PC-9 (cell line): ENCODE measurements at regions of chr1 and their contacts with region 1.

Region 1: DNA sequence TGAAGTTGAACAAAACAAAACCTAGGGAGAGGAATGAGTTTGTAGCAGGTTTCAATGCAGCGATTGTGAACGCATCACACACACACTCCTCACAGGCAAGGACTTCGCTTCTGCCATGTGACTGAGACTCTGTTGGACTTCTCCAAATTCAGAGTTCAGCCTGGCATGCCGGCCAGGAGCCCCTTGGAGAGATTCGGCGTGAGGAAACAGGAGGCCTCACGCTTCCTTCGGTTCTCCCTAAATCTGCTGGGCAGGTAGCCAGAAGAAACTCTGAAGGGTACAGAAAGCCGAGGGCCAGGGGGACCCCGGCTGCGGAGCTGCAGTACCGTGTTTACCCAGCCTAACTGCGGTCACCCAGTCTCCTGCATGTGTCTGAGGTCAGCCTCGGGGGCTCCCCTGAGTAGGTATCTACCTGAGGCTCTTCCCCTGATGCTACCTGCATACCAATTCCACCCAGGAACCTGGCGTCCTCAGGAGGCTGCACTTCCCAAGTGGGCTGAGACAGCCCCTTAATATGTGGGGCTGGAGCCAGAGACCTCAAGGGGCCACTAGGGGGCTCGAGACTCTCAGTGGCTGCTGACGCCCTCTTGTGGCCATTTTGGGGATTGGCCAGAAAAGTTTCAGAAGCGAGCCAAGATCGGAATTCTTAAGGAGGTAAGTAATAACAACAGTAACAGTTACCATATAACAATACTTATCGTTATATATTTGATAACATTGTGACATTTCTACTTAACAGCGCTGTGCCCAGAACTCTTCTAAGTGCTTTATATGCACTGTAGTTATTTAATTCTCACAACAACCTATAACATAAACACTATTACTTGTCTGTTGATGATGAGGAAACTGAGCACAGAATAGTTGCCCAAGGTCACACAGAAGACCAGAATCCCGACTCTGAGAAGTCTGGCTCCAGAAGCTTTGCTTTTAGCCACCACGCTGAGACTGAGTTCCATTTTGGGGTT is 2.7 kb upstream of the ANXA9 start:
- DNase-seq: peak; percentile 72 to 84
- H3K4me3 ChIP-seq: no peak overlapping the region
- H3K27ac ChIP-seq: peak overlapping the region; percentile 77; the same call in 1 of the 2 replicates
- H3K4me1 ChIP-seq: peaks cover 90% of the 10 kb centered on the region
- H3K27me3 ChIP-seq: no peaks in the 10 kb centered on the region
- CTCF ChIP-seq: peak; percentile 99

Region 2: DNA sequence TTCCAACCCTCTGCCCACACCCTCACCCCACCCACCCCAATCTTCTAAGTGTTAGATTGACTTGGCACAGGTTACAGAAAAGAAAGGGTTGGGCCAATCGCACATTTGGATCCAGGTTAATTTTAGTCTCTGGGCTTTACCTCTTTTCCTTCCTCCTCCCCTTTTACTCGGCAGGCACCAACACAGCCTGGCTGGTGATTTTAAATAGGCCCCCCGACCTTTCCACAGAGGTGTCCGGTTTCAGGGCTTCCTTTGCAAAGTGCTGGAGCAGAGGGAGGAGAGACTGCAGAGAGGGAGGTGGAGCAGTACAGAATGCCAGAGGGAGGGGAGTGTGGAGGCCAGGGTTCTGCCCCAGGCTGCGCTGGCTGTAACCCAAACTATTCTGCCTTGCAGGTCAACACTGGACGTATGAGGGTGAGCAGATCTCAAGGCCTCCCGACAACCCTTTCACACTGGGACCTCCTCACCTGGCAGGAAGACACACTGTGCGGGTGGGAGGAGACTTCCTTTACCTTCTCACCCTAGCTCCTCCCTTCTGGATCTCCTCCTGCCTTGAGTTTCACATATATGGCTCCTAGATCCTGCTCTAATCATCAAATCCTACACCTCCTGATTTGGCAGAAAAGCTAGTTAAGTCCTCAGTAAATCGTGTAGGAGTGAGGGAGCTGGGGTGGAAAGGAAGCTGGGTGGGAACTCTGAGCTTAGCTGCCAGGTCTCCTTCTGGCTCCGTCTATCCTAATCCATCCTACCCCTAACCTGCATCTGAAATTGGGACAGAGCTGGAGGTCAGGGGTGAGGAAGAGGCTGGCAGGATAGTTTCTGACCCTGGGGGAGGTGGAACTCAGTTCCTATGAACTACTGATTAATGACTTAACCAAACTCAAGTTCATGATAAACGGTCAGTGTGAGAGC is 719.4 kb before region 1 on chr1:
- CTCF ChIA-PET with region 1: no interaction called
- POLR2A ChIA-PET with region 1: no interaction called
- intact Hi-C with region 1: loop called (anchors 10 kb)
- DNase-seq: peak; percentile 85 to 95
- H3K4me3 ChIP-seq: peak overlapping the region; percentile 44; the same call in 1 of the 2 replicates
- H3K27ac ChIP-seq: peak overlapping the region; percentile 71
- H3K4me1 ChIP-seq: peaks cover 68% of the 10 kb centered on the region
- H3K27me3 ChIP-seq: no peaks in the 10 kb centered on the region
- CTCF ChIP-seq: no peak

Region 3: DNA sequence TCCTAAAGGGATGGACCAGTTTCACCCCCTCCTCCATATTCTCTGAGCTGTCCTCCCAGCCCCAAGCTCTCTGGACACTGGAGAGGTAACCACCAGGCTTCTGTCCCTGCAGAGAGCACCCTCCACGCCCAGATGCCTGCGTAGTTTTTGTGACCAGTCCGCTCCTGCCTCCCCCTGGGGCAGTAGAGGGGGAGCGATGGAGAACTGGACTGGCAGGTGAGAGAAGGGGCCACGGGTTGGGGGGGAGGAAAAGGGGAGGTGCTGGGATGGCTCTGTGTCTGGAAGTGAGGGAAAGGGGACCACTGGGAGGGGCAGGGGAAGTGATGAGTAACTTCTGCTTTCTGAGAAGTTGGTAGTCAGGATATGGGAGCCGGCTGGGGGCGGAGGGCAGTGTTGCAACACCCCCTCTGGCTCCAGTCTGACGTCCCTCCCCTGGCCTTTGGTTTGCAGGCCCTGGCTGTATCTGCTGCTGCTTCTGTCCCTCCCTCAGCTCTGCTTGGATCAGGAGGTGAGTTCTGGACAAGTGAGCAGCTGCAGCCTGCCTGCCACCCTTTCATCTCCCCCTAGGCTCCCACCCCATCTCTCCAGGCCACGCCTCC is 427.2 kb before region 1 on chr1:
- CTCF ChIA-PET with region 1: no interaction called
- POLR2A ChIA-PET with region 1: interaction called, 22 read pairs
- intact Hi-C with region 1: no loop called
- DNase-seq: peak; percentile 89 to 91
- H3K4me3 ChIP-seq: no peak overlapping the region
- H3K27ac ChIP-seq: peak overlapping the region; percentile 65
- H3K4me1 ChIP-seq: peaks cover 46% of the 10 kb centered on the region
- H3K27me3 ChIP-seq: no peaks in the 10 kb centered on the region
- CTCF ChIP-seq: no peak

Region 4: DNA sequence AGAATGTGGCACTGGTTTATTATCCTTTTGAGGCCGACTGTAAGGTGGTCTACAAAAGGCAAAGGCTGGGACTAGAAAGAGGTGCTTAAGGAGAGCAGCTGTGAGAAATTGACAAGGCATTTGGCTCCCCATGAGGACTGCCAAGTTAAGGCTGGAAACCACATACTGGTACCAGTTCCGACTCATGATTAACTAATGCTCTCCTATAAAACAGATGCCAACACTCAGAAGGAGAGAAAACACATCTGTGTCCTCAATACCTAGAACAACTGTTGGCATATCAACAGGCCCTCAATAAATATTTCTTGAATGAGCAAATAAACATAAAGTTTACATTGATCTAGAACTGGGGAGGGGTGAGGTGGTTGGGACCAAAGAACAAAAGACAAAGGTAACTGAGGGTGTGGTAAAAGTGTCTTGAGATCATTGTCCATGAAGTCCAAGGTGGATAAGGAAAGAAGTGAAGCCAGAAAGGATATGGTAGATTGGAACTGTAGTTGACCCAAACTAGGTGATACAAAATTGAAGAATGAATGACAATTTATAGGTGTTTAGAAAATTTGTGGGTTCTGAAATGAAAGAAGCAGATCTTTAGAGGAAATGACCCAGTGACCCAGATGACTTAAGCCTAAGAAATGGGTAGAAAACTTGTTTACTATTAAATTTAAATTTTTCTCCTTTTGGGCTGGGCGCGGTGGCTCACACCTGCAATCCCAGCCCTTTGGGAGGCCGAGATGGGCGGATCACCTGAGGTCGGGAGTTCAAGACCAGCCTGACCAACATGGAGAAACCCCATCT is 383.1 kb before region 1 on chr1:
- CTCF ChIA-PET with region 1: no interaction called
- POLR2A ChIA-PET with region 1: interaction called, 11 read pairs
- intact Hi-C with region 1: no loop called
- DNase-seq: no peak
- H3K4me3 ChIP-seq: no peak overlapping the region
- H3K27ac ChIP-seq: 0 out of 2 replicates have a peak overlapping the region, but pooled peaks have one; percentile 17
- H3K4me1 ChIP-seq: peaks cover 30% of the 10 kb centered on the region
- H3K27me3 ChIP-seq: no peaks in the 10 kb centered on the region
- CTCF ChIP-seq: no peak

Region 5: GRCh38 chr1:150876119-150876454 is 103.3 kb before region 1 on chr1:
- CTCF ChIA-PET with region 1: no interaction called
- POLR2A ChIA-PET with region 1: no interaction called
- intact Hi-C with region 1: loop called (anchors 5 kb)
- DNase-seq: peak; percentile 37 to 54
- H3K4me3 ChIP-seq: peak overlapping the region; percentile 97
- H3K27ac ChIP-seq: peak overlapping the region; percentile 35; the same call in 1 of the 2 replicates
- H3K4me1 ChIP-seq: peaks cover 24% of the 10 kb centered on the region
- H3K27me3 ChIP-seq: no peaks in the 10 kb centered on the region
- CTCF ChIP-seq: no peak

Region 6: GRCh38 chr1:150957666-150958065 is 21.7 kb before region 1 on chr1:
- CTCF ChIA-PET with region 1: interaction called, 15 read pairs
- POLR2A ChIA-PET with region 1: interaction called, 11 read pairs
- intact Hi-C with region 1: no loop called
- DNase-seq: no peak
- H3K4me3 ChIP-seq: no peak overlapping the region
- H3K27ac ChIP-seq: no peak overlapping the region
- H3K4me1 ChIP-seq: no peaks in the 10 kb centered on the region
- H3K27me3 ChIP-seq: no peaks in the 10 kb centered on the region
- CTCF ChIP-seq: no peak

Region 7: DNA sequence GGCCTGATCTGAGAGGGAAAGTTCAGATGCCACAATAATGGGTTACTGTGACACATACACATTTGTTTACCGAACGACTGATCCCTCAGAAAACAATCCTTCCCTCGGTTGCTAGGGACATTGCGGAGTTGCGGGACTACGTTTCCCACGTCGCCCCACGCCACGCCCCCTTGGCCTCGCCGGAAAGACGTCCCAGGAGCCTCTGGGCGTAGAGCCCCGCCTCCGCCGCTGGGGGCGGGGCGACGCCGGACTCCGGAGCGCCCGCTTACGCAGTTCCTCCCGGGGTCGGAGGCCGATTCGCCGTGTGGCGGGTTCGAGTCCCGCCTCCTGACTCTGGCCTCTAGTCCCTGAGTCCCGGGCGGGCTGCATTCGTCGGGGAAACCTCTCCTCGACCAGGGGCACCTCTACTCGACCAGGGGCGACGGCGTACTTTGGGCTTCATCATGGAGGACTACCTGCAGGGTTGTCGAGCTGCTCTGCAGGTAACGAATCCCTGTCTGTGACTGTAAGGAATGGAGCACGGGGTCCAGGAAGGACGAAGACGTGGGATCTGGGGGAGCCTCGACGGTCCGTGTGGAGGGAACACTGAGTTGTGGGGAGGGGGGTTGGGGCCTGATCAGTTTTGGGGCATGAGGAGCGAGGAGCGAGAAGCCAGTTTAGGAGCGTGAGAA is 29.0 kb after region 1 on chr1 and contains the start of gene PRUNE1:
- CTCF ChIA-PET with region 1: interaction called, 11 read pairs
- POLR2A ChIA-PET with region 1: interaction called, 14 read pairs
- intact Hi-C with region 1: no loop called
- DNase-seq: peak; percentile 95
- H3K4me3 ChIP-seq: peak within 1 kb of the TSS; percentile 89
- H3K27ac ChIP-seq: peak within 1 kb of the TSS; percentile 68
- H3K4me1 ChIP-seq: peaks cover 52% of the 10 kb centered on the region
- H3K27me3 ChIP-seq: no peaks in the 10 kb centered on the region
- CTCF ChIP-seq: no peak
- total RNA-seq, gene PRUNE1: 26.6 and 30.7 TPM in 2 replicates